HepG2 (cell line): ENCODE measurements at regions of chr6 and their contacts with region 1.

Region 1: DNA sequence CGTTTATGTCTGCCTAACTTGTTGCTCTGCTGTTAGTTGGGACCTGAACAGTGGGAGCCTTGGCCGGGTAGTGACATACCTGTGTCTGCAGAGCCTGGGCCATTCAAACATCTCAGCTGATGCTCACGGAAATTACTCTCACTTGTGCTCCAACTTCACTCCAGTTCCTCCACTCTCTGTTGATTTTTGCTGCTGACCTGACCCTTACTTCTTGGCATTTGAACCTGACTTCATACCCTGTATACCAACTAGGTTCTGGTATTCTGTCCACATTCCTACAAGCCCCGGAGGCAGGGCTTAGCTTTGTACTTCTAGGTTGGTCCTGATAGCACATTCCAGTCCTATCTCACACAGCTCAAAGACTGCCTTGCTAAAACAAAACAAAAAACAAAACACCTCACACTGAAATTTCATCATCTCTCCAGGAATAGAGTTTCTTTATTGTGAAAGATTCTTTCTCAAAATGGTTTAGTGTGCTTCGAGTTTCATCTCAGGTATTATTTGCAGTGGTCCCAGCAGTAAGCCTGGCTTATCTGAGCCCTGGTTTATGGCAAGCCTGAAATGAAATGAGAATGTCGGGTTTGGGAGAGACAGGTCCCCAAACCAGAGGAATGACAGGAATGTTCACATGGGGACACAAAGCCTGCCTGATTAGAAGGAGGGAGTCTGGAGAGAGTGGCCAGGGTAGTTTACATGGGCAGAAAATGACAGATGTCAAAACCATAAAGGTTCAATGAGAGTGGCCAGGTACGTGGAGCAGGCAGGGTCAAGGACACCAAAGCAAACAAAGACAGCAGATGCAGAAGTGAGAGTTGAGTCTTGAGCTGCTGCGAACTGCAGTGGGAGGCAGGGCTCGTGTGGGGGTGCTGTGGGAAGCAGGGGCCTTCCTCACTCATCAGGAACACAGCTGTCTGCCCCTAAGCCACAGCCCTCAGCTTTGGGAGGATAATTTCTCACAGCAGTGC is 174.2 kb upstream of the HDAC2 start:
- DNase-seq: peak; percentile 98
- ATAC-seq: peak; percentile 99
- H3K4me3 ChIP-seq: peak overlapping the region; percentile 30 to 53 (median 44); a peak in 5 of 6 replicates
- H3K27ac ChIP-seq: peak overlapping the region; percentile 82
- H3K4me1 ChIP-seq: peaks cover 54% of the 10 kb centered on the region
- H3K27me3 ChIP-seq: no peaks in the 10 kb centered on the region
- CTCF ChIP-seq: peak; percentile 48
- EP300 ChIP-seq: peak; percentile 38 to 88; a peak in 3 of 4 replicates
- POLR2A ChIP-seq: no peak; a peak in 1 of 4 replicates
- RAD21 ChIP-seq: no peak

Region 2: GRCh38 chr6:114108119-114109002 is 36.8 kb before region 1 on chr6:
- CTCF ChIA-PET with region 1: no interaction called
- POLR2A ChIA-PET with region 1: interaction called, 9 read pairs
- in situ Hi-C with region 1: no loop called
- intact Hi-C with region 1: loop called (anchors 2 kb)
- DNase-seq: peak; percentile 63
- ATAC-seq: peak; percentile 92
- H3K4me3 ChIP-seq: no peak overlapping the region
- H3K27ac ChIP-seq: no peak overlapping the region
- H3K4me1 ChIP-seq: peaks cover 10% of the 10 kb centered on the region
- H3K27me3 ChIP-seq: no peaks in the 10 kb centered on the region
- CTCF ChIP-seq: peak; percentile 71
- EP300 ChIP-seq: no peak
- POLR2A ChIP-seq: no peak
- RAD21 ChIP-seq: peak; percentile 18; the same call in 1 of the 2 replicates

Region 3: DNA sequence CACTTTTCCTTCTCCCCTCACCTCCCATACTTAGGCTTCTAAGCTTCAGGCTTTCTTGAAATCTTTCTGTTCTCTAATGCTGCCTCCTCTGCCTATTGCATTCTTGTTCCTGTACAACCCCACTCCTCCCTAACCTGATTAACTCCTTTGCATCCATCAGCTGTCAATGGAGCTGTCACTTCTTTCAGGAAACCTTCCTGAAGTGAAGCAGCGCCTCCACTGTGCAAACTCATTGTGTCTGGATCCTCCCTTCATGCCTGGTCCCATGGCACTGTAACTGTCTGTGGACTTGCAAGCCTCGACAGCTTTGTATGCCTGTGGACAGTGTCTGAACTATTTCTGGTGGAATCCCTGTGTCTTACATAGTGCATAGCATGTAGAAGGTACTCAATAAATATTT is 12.7 kb after region 1 on chr6:
- CTCF ChIA-PET with region 1: no interaction called
- POLR2A ChIA-PET with region 1: interaction called, 9 read pairs
- in situ Hi-C with region 1: no loop called
- intact Hi-C with region 1: loop called (anchors 1 kb)
- DNase-seq: no peak
- ATAC-seq: no peak
- H3K4me3 ChIP-seq: no peak overlapping the region
- H3K27ac ChIP-seq: no peak overlapping the region
- H3K4me1 ChIP-seq: peaks cover 47% of the 10 kb centered on the region
- H3K27me3 ChIP-seq: no peaks in the 10 kb centered on the region
- CTCF ChIP-seq: no peak
- EP300 ChIP-seq: no peak
- POLR2A ChIP-seq: no peak
- RAD21 ChIP-seq: no peak

Region 4: DNA sequence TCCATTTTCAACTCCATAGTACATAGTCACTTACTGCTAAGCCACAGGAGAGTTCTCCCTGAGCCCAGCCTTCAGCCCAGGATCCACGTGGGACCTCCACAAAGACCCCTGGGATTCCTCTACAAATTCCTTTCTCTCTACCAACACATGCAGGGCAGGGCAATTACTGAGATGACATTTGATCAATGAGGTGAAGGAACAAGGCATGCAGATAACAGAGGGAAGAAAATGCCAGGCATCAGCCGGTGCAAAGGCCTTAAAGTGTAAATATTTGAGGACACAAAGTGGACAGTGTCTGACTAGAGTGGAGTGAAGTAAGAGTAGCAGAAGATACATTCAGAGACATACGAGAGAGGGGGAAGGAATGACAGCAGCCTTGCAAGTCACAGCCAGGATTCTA is 127.4 kb after region 1 on chr6:
- CTCF ChIA-PET with region 1: no interaction called
- POLR2A ChIA-PET with region 1: no interaction called
- in situ Hi-C with region 1: no loop called
- intact Hi-C with region 1: loop called (anchors 5 kb)
- DNase-seq: peak; percentile 90
- ATAC-seq: peak; percentile 100
- H3K4me3 ChIP-seq: no peak overlapping the region
- H3K27ac ChIP-seq: peak overlapping the region; percentile 37
- H3K4me1 ChIP-seq: peaks cover 32% of the 10 kb centered on the region
- H3K27me3 ChIP-seq: no peaks in the 10 kb centered on the region
- CTCF ChIP-seq: no peak
- EP300 ChIP-seq: peak in 1 of 2 experiments; percentile 80; a peak in 2 of 4 replicates
- POLR2A ChIP-seq: no peak
- RAD21 ChIP-seq: no peak